ENCODE measurements at regions of chr11 and their contacts with region 1.

Region 1: GRCh38 chr11:58524232-58525036 is 16.5 kb upstream of the OR5B21 start:
- DNase-seq: peak; percentile 64
- H3K4me3 Mint-ChIP-seq: peak overlapping the region; percentile 63
- H3K27ac Mint-ChIP-seq: peak overlapping the region; percentile 82
- H3K4me1 Mint-ChIP-seq: peaks cover 47% of the 10 kb centered on the region
- H3K27me3 Mint-ChIP-seq: no peaks in the 10 kb centered on the region

Region 2: DNA sequence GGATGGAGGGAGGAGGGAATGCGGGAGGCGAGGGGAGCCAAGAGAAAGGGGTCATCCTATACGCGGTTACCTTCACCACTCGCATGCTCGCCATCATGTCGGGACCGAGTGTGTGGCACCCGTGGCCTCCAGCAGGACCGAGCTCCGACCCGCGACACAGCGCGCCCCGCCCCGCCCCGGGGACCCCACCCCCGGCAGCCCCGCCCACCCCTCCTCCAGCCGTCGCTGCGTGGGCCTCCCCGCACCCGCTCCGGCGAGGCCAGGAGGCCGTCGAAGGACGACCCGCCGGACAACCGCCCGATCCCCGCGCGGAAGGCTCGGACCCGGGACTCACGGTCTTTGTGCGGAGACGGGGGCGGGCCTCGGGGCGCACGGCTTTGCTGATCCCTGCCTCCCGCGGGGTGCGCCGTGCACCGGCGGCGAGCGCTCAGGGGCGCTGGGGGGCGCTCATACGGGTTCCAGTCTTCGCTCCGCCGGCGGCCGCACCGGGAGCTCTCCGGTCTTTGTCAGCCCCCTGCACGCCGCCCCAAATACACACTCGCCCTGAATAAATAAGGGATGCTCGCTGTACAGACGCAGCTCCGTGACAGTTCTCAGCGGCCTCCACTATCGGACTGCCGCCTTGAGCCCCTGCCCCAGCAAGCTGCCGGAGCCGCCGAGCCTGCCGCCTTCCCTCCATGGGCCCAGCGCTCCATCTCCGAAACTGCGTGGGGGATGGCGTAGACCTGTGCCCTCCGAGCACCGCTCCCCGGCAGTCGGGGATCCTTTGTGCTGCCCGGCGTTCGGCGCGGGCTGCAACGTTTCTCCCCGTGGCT is 956.7 kb before region 1 on chr11 and contains the start of gene UBE2L6:
- CTCF ChIA-PET with region 1: no interaction called
- POLR2A ChIA-PET with region 1: no interaction called
- intact Hi-C with region 1: loop called (anchors 5 kb)
- DNase-seq: peak; percentile 70
- H3K4me3 Mint-ChIP-seq: peak within 1 kb of the TSS; percentile 92
- H3K27ac Mint-ChIP-seq: peak within 1 kb of the TSS; percentile 98
- H3K4me1 Mint-ChIP-seq: peaks cover 31% of the 10 kb centered on the region
- H3K27me3 Mint-ChIP-seq: no peaks in the 10 kb centered on the region
- total RNA-seq, gene UBE2L6: 152 to 162 TPM

Region 3: GRCh38 chr11:57792060-57792541 is 732.3 kb before region 1 on chr11:
- CTCF ChIA-PET with region 1: interaction called, 3 read pairs
- POLR2A ChIA-PET with region 1: no interaction called
- intact Hi-C with region 1: loop called (anchors 2 kb)
- DNase-seq: peak; percentile 90
- H3K4me3 Mint-ChIP-seq: peak overlapping the region; percentile 55
- H3K27ac Mint-ChIP-seq: peak overlapping the region; percentile 86
- H3K4me1 Mint-ChIP-seq: peaks cover 34% of the 10 kb centered on the region
- H3K27me3 Mint-ChIP-seq: peaks cover 1% of the 10 kb centered on the region

Region 4: GRCh38 chr11:58433638-58434203 is 90.7 kb before region 1 on chr11:
- CTCF ChIA-PET with region 1: no interaction called
- POLR2A ChIA-PET with region 1: no interaction called
- intact Hi-C with region 1: no loop called
- DNase-seq: no peak
- H3K4me3 Mint-ChIP-seq: no peak overlapping the region
- H3K27ac Mint-ChIP-seq: no peak overlapping the region
- H3K4me1 Mint-ChIP-seq: no peaks in the 10 kb centered on the region
- H3K27me3 Mint-ChIP-seq: peaks cover 7% of the 10 kb centered on the region

Region 5: DNA sequence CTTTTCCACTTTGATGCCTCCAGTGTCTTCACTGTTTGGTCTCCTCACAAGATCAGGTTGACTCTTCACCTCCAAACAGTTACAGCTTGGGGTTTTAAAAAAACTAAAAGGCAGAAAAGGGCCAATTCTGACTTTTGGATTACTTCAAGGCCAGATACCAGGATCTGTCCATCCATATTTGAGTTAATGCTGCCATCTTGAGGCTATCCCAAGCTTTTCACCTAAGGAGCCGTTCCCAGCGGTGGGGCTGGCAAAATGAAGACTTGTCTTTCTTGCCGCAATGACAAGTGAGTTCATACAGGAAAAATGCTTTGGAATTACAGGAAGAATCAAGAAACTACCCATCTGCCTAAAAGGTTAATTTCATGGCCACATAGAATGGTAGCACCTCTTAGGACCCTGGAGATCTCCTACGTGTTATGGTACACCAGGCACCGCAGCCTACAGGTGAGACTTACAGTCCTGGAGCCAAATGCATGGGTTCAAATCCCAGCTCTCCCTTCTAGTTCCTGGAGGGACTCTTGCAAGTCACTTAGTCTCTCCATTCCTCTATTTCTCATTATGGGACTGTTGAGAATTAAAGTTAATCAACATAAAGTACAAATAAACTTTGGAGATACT is 10.6 kb before region 1 on chr11:
- CTCF ChIA-PET with region 1: interaction called, 21 read pairs
- POLR2A ChIA-PET with region 1: interaction called, 3 read pairs
- intact Hi-C with region 1: no loop called
- DNase-seq: peak; percentile 21
- H3K4me3 Mint-ChIP-seq: no peak overlapping the region
- H3K27ac Mint-ChIP-seq: no peak overlapping the region
- H3K4me1 Mint-ChIP-seq: peaks cover 4% of the 10 kb centered on the region
- H3K27me3 Mint-ChIP-seq: no peaks in the 10 kb centered on the region

Region 6: GRCh38 chr11:58592760-58593472 is 68.5 kb after region 1 on chr11:
- CTCF ChIA-PET with region 1: no interaction called
- POLR2A ChIA-PET with region 1: no interaction called
- intact Hi-C with region 1: loop called (anchors 2 kb)
- DNase-seq: peak; percentile 76
- H3K4me3 Mint-ChIP-seq: no peak overlapping the region
- H3K27ac Mint-ChIP-seq: peak overlapping the region; percentile 45
- H3K4me1 Mint-ChIP-seq: peaks cover 73% of the 10 kb centered on the region
- H3K27me3 Mint-ChIP-seq: no peaks in the 10 kb centered on the region

Region 7: GRCh38 chr11:58775066-58775708 is 250.8 kb after region 1 on chr11:
- CTCF ChIA-PET with region 1: no interaction called
- POLR2A ChIA-PET with region 1: no interaction called
- intact Hi-C with region 1: loop called (anchors 1 kb)
- DNase-seq: peak; percentile 27
- H3K4me3 Mint-ChIP-seq: no peak overlapping the region
- H3K27ac Mint-ChIP-seq: no peak overlapping the region
- H3K4me1 Mint-ChIP-seq: peaks cover 6% of the 10 kb centered on the region
- H3K27me3 Mint-ChIP-seq: peaks cover 21% of the 10 kb centered on the region

Measured in activated CD4-positive, alpha-beta memory T cell treated with anti-CD3 and anti-CD28 coated beads for 36 hours (primary cell).